Natural killer cell (primary cell): ENCODE measurements at regions of chrX and their contacts with region 1.

Region 1: DNA sequence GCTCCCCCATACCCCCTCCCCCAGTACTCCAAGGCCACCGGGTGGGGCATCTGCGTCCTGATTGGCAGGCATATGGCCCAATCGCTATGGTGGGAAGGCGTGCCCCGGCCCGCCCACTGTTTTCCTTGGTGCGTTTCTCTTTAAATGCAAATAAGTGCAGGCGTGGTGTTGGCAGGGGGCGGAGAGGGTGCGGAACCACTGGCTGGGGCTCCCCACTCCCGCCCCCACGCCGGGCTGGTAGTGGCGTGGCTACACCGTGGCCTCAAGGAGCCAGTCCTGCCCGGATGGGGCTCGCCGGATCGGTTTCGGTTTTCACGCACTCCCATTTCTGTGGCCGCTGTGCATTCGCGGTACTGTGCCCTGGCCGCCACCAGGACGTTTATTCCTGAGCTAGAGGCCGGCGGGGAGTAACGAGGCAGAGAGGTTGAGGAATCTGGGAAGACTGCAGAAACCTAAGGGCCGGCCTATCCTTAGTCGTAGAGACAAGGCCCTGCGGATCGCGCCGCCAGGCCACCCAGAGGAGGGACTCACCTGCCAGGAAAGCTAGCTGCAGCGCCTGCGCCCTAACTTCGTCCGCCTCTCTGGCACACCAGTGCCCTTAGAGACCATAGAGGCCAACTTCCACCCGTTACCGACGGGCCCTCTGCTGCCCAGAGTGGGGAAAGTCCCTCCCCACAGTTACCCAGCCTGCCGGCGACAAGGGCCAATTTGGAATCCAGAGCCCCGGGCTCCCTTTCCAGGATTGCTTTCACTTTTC is 405 bp upstream of the AMER1 start:
- DNase-seq: peak; percentile 81 to 92
- ATAC-seq: peak; percentile 86 to 95 (median 87)
- H3K4me3 ChIP-seq: peak overlapping the region; percentile 93
- H3K4me3 Mint-ChIP-seq: peak overlapping the region; percentile 91
- H3K27ac ChIP-seq: peak overlapping the region; percentile 99
- H3K27ac Mint-ChIP-seq: peak overlapping the region; percentile 89 to 92
- H3K4me1 ChIP-seq: peaks cover 22% of the 10 kb centered on the region
- H3K4me1 Mint-ChIP-seq: peaks cover 0 to 7% of the 10 kb centered on the region in 2 donors
- H3K27me3 ChIP-seq: no peaks in the 10 kb centered on the region
- H3K27me3 Mint-ChIP-seq: no peaks in the 10 kb centered on the region
- CTCF ChIP-seq: no peak

Region 2: GRCh38 chrX:63560601-63561218 is 645.2 kb before region 1 on chrX:
- intact Hi-C with region 1: loop called (anchors 10 kb)
- DNase-seq: peak; percentile 40 to 75
- ATAC-seq: peak; percentile 79 to 89 (median 89)
- H3K4me3 ChIP-seq: peak overlapping the region; percentile 55
- H3K4me3 Mint-ChIP-seq: peak overlapping the region; percentile 94
- H3K27ac ChIP-seq: peak overlapping the region; percentile 67
- H3K27ac Mint-ChIP-seq: peak overlapping the region; percentile 92 to 97
- H3K4me1 ChIP-seq: no peaks in the 10 kb centered on the region
- H3K4me1 Mint-ChIP-seq: peaks cover 21 to 40% of the 10 kb centered on the region in 2 donors
- H3K27me3 ChIP-seq: no peaks in the 10 kb centered on the region
- H3K27me3 Mint-ChIP-seq: peaks cover 0 to 6% of the 10 kb centered on the region in 2 donors
- CTCF ChIP-seq: no peak

Region 3: GRCh38 chrX:63754860-63755582 is 450.9 kb before region 1 on chrX:
- intact Hi-C with region 1: loop called (anchors 5 kb)
- DNase-seq: peak; percentile 78 to 92
- ATAC-seq: peak; percentile 92 to 98 (median 95)
- H3K4me3 ChIP-seq: peak overlapping the region; percentile 95
- H3K4me3 Mint-ChIP-seq: peak overlapping the region; percentile 98
- H3K27ac ChIP-seq: peak overlapping the region; percentile 96
- H3K27ac Mint-ChIP-seq: peak overlapping the region; percentile 91 to 99
- H3K4me1 ChIP-seq: peaks cover 23% of the 10 kb centered on the region
- H3K4me1 Mint-ChIP-seq: peaks cover 41 to 47% of the 10 kb centered on the region in 2 donors
- H3K27me3 ChIP-seq: no peaks in the 10 kb centered on the region
- H3K27me3 Mint-ChIP-seq: peaks cover 0 to 12% of the 10 kb centered on the region in 2 donors
- CTCF ChIP-seq: no peak

Region 4: GRCh38 chrX:64186974-64187761 is 18.7 kb before region 1 on chrX:
- intact Hi-C with region 1: no loop called
- DNase-seq: no peak
- ATAC-seq: no peak
- H3K4me3 ChIP-seq: no peak overlapping the region
- H3K4me3 Mint-ChIP-seq: no peak overlapping the region
- H3K27ac ChIP-seq: no peak overlapping the region
- H3K27ac Mint-ChIP-seq: no peak overlapping the region
- H3K4me1 ChIP-seq: no peaks in the 10 kb centered on the region
- H3K4me1 Mint-ChIP-seq: no peaks in the 10 kb centered on the region
- H3K27me3 ChIP-seq: no peaks in the 10 kb centered on the region
- H3K27me3 Mint-ChIP-seq: no peaks in the 10 kb centered on the region
- CTCF ChIP-seq: no peak

Region 5: GRCh38 chrX:64229145-64229544 is 23.2 kb after region 1 on chrX:
- intact Hi-C with region 1: no loop called
- DNase-seq: no peak
- ATAC-seq: no peak
- H3K4me3 ChIP-seq: no peak overlapping the region
- H3K4me3 Mint-ChIP-seq: no peak overlapping the region
- H3K27ac ChIP-seq: no peak overlapping the region
- H3K27ac Mint-ChIP-seq: no peak overlapping the region
- H3K4me1 ChIP-seq: no peaks in the 10 kb centered on the region
- H3K4me1 Mint-ChIP-seq: no peaks in the 10 kb centered on the region
- H3K27me3 ChIP-seq: no peaks in the 10 kb centered on the region
- H3K27me3 Mint-ChIP-seq: no peaks in the 10 kb centered on the region
- CTCF ChIP-seq: no peak

Region 6: DNA sequence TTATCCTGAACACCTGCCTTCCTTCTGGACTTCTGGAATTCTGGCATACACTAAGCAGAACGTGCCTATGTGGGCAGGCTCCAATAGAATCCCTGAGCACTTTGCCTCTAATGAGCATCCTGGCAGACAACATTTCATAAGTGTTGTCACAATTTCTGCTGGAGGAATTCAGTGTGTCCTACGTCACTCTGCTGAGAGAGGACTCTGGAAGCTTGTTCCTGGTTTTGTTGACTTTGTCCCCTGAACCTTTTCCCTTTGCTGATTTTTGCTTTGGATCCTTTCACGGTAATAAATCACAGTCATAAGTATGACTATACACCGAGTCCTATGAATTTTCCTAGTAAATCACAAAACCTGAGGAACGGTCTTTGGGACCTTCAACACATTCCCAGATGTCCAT is 146.2 kb after region 1 on chrX:
- intact Hi-C with region 1: no loop called
- DNase-seq: no peak
- ATAC-seq: no peak
- H3K4me3 ChIP-seq: no peak overlapping the region
- H3K4me3 Mint-ChIP-seq: no peak overlapping the region
- H3K27ac ChIP-seq: no peak overlapping the region
- H3K27ac Mint-ChIP-seq: no peak overlapping the region
- H3K4me1 ChIP-seq: no peaks in the 10 kb centered on the region
- H3K4me1 Mint-ChIP-seq: peaks cover 18 to 28% of the 10 kb centered on the region in 2 donors
- H3K27me3 ChIP-seq: no peaks in the 10 kb centered on the region
- H3K27me3 Mint-ChIP-seq: no peaks in the 10 kb centered on the region
- CTCF ChIP-seq: no peak

Region 7: DNA sequence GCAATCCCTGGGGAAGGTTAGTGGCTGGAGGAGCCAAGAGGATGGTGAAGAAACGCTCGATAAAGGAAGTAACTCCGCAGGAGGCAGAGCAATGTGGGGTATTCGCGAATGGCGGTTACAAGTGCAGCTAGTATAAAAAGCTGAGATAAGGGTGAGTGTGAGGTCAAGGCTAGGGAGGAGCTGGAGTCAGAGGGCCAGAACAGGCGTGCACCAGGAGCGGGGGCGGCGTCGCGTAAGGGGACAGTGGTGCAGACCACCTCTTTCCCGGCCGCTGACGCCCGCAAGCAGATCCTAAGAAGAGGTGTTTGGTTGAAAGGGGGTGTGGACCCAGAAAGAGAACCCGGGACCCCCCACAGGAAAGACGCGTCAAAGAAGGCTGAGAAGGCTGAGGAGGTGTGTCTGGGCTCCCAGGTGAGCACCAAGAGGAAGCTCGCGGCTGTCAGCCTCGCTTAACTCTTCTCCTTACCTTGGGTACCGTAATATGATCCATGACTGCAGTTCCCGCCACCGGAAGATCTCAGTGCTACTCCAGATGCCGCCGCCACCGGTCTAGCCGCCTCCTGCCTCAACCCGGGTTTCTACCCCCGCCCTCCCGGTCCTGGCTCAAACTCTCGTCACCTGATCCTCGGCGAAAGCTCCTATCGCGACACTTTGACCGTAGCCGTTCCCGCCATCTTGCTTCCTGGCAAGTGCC is 189.1 kb after region 1 on chrX and contains the start of gene MTMR8:
- intact Hi-C with region 1: loop called (anchors 1 kb)
- DNase-seq: peak; percentile 67 to 86
- ATAC-seq: peak; percentile 93 to 95 (median 93)
- H3K4me3 ChIP-seq: peak within 1 kb of the TSS; percentile 93
- H3K4me3 Mint-ChIP-seq: peak within 1 kb of the TSS; percentile 94
- H3K27ac ChIP-seq: peak within 1 kb of the TSS; percentile 55
- H3K27ac Mint-ChIP-seq: peak within 1 kb of the TSS; percentile 78 to 94
- H3K4me1 ChIP-seq: peaks cover 18% of the 10 kb centered on the region
- H3K4me1 Mint-ChIP-seq: peaks cover 25 to 35% of the 10 kb centered on the region in 2 donors
- H3K27me3 ChIP-seq: no peaks in the 10 kb centered on the region
- H3K27me3 Mint-ChIP-seq: no peaks in the 10 kb centered on the region
- CTCF ChIP-seq: no peak
- total RNA-seq, gene MTMR8: 5.7 to 9.3 (median 7.9) TPM

Region 8: DNA sequence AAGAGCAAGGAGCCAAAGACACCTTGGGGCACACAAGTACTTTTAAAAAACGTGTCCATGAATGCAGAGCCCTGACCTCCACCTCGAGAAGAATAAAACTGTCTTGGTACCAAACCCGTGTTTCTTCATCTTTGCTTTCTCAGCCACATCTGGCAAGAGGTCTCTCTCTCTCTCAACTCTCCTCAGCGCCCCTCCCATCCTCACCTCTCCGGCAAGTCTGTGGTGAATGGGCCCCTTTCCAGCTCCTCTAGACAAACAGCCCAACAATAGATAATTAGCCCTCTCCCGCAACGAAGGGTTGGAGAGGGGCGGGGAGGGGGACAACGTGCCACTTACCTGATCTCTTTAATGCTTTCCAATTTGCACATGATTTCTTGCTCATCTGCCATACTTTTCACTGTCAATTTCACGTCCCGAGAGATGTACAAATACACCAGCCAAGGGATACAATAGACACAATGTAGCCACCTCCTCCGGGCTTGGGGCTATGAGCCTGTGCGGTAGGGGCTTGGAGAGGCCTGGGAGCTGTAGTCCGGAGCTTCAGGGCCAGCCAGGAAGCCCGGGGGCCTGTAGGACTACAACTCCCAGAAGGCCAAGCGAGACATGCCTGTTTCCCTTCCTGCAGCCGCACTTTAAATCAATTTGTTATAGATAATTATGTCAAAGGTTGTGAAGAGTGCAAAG is 770.2 kb after region 1 on chrX and contains the start of gene ZC4H2:
- intact Hi-C with region 1: loop called (anchors 5 kb)
- DNase-seq: peak; percentile 24 to 80
- ATAC-seq: peak; percentile 86 to 94 (median 92)
- H3K4me3 ChIP-seq: peak within 1 kb of the TSS; percentile 49
- H3K4me3 Mint-ChIP-seq: peak within 1 kb of the TSS; percentile 95
- H3K27ac ChIP-seq: no peak within 1 kb of the TSS
- H3K27ac Mint-ChIP-seq: peak within 1 kb of the TSS; percentile 65 to 80
- H3K4me1 ChIP-seq: peaks cover 5% of the 10 kb centered on the region
- H3K4me1 Mint-ChIP-seq: peaks cover 19 to 22% of the 10 kb centered on the region in 2 donors
- H3K27me3 ChIP-seq: no peaks in the 10 kb centered on the region
- H3K27me3 Mint-ChIP-seq: peaks cover 0 to 11% of the 10 kb centered on the region in 2 donors
- CTCF ChIP-seq: no peak
- total RNA-seq, gene ZC4H2: 3.1 to 5.1 (median 4.5) TPM

Region 9: DNA sequence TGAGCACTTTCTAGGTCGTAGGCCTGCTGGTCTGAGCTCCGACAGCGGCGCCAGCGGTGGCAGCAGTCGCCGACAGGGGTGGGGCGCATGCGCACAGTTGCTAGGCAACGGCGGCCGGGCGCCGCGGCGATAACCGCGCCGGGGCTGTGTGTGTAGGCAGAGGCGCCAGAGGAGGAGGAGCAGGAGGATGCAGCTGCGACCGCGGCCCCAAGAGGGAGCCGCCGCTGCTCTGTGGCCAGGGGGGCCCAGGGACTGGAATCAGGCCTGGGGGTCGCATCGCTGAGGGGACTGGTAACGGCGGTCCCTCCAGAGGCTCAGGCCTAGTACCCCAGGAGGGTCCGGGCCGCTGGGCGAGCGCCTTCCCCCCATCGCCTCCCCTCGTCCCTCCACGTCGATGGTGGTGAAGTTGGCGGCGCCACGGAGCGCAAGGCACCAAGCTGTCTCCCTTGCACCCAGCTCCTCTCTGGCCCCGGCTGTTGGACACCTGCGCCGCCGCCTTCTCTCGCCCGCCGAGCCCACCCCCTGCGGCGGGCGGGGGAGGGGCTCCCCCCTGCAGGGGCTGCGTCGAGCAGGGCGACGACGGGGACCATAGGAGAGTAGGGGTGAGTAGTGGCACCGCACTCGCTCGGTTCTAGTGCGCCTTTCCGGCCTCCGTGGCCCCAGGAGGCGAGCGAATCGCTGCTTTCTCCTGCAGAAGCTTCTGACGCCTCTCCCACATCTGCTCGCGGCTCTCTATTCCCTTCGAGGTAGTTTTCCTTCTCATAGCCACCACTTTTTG is 828.9 kb after region 1 on chrX:
- intact Hi-C with region 1: loop called (anchors 10 kb)
- DNase-seq: peak; percentile 54 to 89
- ATAC-seq: peak; percentile 85 to 93 (median 89)
- H3K4me3 ChIP-seq: peak within 1 kb of the TSS; percentile 69
- H3K4me3 Mint-ChIP-seq: peak within 1 kb of the TSS; percentile 91
- H3K27ac ChIP-seq: peak within 1 kb of the TSS; percentile 84
- H3K27ac Mint-ChIP-seq: peak within 1 kb of the TSS; percentile 86 to 91
- H3K4me1 ChIP-seq: no peaks in the 10 kb centered on the region
- H3K4me1 Mint-ChIP-seq: peaks cover 5 to 8% of the 10 kb centered on the region in 2 donors
- H3K27me3 ChIP-seq: no peaks in the 10 kb centered on the region
- H3K27me3 Mint-ChIP-seq: peaks cover 2 to 17% of the 10 kb centered on the region in 2 donors
- CTCF ChIP-seq: peak; percentile 12